Mammary epithelial cell (primary cell): ENCODE measurements at regions of chr17 and their contacts with region 1.

Region 1: GRCh38 chr17:46044286-46044928 is 45.4 kb downstream of the STH start:
- DNase-seq: peak; percentile 74
- H3K4me3 ChIP-seq: no peak overlapping the region
- H3K27ac ChIP-seq: no peak overlapping the region
- H3K4me1 ChIP-seq: no peaks in the 10 kb centered on the region
- H3K27me3 ChIP-seq: no peaks in the 10 kb centered on the region
- CTCF ChIP-seq: peak; percentile 76 to 89

Region 2: GRCh38 chr17:46108550-46109110 is 64.2 kb after region 1 on chr17:
- CTCF ChIA-PET with region 1: no interaction called
- dilution Hi-C with region 1: no loop called
- in situ Hi-C with region 1: no loop called
- intact Hi-C with region 1: loop called (anchors 10 kb)
- DNase-seq: no peak
- H3K4me3 ChIP-seq: no peak overlapping the region
- H3K27ac ChIP-seq: no peak overlapping the region
- H3K4me1 ChIP-seq: peaks cover 11% of the 10 kb centered on the region
- H3K27me3 ChIP-seq: no peaks in the 10 kb centered on the region
- CTCF ChIP-seq: no peak

Region 3: DNA sequence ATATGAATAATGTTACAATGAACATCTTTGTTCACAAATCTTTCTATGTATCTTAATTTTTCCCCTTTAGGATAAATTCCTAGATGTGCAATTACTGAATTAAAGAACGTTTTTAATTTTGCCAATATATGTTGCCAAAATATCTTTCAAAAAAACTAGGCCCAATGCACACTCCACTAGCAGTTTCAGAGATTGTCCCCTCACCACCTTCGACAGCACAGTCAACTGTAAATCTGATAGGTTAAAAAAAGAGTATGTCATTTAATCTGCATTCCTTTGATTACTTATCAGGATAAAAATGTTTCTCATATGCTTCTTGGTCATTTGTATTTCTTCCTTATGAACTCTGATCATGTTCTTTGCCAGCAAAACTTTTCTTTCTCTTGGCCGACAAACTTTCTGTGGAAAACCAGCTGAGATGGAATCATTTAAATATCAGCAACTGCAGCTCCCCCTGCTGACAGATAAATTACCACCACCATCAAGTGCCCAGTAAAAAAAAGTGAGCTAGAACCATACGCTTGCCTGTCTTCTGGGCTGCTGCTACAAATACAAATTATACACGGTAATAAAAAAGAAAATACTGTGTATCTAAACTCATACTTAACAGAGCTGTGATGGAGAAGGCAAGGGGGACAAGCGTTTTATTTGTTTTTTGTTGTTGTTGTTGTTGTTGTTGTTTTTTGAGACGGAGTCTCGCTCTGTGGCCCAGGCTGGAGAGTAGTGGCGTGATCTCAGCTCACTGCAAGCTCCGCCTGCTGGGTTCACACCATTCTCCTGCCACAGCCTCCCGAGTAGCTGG is 168.4 kb after region 1 on chr17:
- CTCF ChIA-PET with region 1: interaction called, 7 read pairs
- dilution Hi-C with region 1: no loop called
- in situ Hi-C with region 1: no loop called
- intact Hi-C with region 1: loop called (anchors 5 kb)
- DNase-seq: peak; percentile 46
- H3K4me3 ChIP-seq: no peak overlapping the region
- H3K27ac ChIP-seq: no peak overlapping the region
- H3K4me1 ChIP-seq: no peaks in the 10 kb centered on the region
- H3K27me3 ChIP-seq: no peaks in the 10 kb centered on the region
- CTCF ChIP-seq: peak; percentile 60 to 66